GM13976 (cell line): ENCODE measurements at regions of chr9 and their contacts with region 1.

Region 1: GRCh38 chr9:100216178-100216787 is 117.2 kb downstream of the INVS start:
- DNase-seq: peak; percentile 42
- CTCF ChIP-seq: peak; percentile 61

Region 2: GRCh38 chr9:99266255-99267023 is 949.8 kb before region 1 on chr9:
- in situ Hi-C with region 1: loop called (anchors 25 kb)
- DNase-seq: peak; percentile 62
- CTCF ChIP-seq: peak; percentile 87

Region 3: GRCh38 chr9:99819856-99820684 is 396.2 kb before region 1 on chr9:
- in situ Hi-C with region 1: loop called (anchors 25 kb)
- DNase-seq: peak; percentile 91
- CTCF ChIP-seq: no peak

Region 4: GRCh38 chr9:100028201-100028784 is 188.0 kb before region 1 on chr9:
- in situ Hi-C with region 1: loop called (anchors 5 kb)
- DNase-seq: peak; percentile 37
- CTCF ChIP-seq: peak; percentile 90

Region 5: GRCh38 chr9:100322954-100323536 is 106.8 kb after region 1 on chr9:
- in situ Hi-C with region 1: no loop called
- DNase-seq: peak; percentile 11
- CTCF ChIP-seq: peak; percentile 57